ENCODE measurements at regions of chr15 and their contacts with region 1.

Region 1: DNA sequence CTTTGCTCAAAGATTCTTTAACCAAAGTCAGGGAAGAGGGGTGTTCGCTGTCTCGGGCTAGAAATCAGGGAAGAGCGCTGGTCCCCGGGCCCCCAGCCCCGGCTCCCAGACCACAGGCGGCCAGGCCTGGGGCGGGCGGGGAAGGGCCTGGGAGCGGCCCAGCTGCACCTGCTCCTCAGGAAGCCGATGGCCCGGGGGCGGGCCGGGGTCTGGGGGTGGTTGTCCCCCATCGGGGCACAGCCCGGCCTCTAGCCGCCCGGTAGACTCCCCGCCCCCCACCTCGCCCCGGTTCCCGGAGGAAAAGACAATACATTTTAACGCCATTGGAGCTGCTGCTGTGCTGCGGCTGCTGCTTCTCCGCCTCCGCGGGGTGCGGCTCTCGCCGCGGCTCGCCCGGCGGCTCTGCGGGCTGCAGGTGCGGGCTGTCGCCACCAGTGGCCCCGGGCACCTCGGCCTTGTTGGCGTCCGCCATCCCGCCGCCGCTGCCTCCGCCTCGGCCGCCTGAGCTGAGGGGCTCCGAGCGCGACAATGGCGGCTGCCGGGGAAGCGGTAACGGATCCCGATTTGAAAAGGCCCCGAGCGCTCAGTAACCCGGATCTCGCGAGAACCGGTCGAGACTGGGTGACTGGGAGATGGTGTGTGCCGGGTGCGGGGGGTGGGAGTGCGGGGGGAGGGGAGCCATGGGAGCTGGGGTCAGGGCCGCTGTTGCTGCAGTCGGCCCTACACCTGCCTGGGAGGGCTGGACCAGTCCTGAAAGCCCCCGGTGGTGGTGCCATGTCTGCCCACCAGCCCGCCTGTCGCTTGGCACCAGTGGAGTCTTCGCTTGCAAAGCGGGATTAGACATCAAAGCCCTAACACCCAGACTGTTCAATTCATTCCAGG is at the start of gene MYEF2:
- DNase-seq: peak; percentile 80
- ATAC-seq: peak; percentile 72
- H3K4me3 ChIP-seq: peak within 1 kb of the TSS; percentile 47 to 71 (median 67)
- H3K4me3 Mint-ChIP-seq: peak within 1 kb of the TSS; percentile 95
- H3K27ac ChIP-seq: peak within 1 kb of the TSS; percentile 21 to 81
- H3K27ac Mint-ChIP-seq: peak within 1 kb of the TSS; percentile 92
- H3K4me1 ChIP-seq: peaks cover 8 to 11% of the 10 kb centered on the region in 2 donors
- H3K4me1 Mint-ChIP-seq: peaks cover 18% of the 10 kb centered on the region
- H3K27me3 ChIP-seq: peaks cover 0 to 5% (median 2%) of the 10 kb centered on the region in 4 experiments
- H3K27me3 Mint-ChIP-seq: peaks cover 17% of the 10 kb centered on the region
- CTCF ChIP-seq: peak; percentile 35
- total RNA-seq, gene MYEF2: 34.3 and 36.3 TPM in 2 replicates

Region 2: DNA sequence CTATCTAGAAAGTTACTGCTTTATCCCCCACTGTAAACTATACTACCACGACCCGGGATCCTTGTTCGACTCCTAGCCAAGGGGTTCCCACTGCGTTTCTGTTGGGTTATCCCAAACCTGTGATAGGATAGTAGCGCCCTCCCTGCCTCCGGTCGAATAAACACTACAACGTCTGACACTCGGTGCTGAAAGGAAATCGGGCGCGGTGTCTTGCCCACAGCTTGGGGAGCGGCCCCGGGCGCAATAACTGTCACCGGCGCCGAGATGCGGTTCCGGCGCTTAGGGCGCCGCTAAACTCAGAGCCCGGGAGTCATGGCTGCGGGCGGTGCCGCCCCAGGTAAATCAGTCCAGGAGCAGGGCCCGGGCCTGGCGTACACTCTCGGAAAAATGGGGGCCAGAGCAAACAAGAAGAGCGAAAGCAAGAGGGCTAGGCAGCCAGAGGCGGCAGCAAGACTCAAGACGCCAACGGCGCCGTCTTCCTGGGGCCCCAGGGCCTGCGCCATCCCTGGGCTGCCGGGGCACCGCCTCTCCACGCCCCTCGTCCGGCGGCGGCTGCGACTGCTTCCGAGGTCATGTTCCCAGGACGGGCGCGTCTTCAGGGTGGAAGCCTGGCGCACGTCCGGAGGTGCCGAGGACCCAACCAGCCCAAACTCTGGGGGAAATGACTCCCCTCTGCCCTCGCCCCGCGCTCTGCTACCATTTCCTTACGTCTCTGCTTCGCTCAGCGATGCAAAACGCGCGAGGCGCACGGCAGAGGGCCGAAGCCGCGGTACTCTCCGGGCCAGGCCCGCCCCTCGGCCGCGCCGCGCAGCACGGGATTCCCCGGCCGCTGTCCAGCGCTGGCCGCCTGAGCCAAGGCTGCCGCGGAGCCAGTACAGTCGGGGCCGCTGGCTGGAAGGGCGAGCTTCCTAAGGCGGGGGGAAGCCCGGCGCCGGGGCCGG is 153.1 kb after region 1 on chr15 and contains the start of gene DUT:
- CTCF ChIA-PET with region 1: no interaction called
- POLR2A ChIA-PET with region 1: no interaction called
- intact Hi-C with region 1: loop called (anchors 2 kb)
- DNase-seq: peak; percentile 89
- ATAC-seq: peak; percentile 78
- H3K4me3 ChIP-seq: peak within 1 kb of the TSS; percentile 76 to 90 (median 77)
- H3K4me3 Mint-ChIP-seq: peak within 1 kb of the TSS; percentile 94
- H3K27ac ChIP-seq: peak within 1 kb of the TSS; percentile 83 to 90
- H3K27ac Mint-ChIP-seq: peak within 1 kb of the TSS; percentile 95
- H3K4me1 ChIP-seq: peaks cover 15 to 17% of the 10 kb centered on the region in 2 donors
- H3K4me1 Mint-ChIP-seq: peaks cover 25% of the 10 kb centered on the region
- H3K27me3 ChIP-seq: no peaks in the 10 kb centered on the region
- H3K27me3 Mint-ChIP-seq: no peaks in the 10 kb centered on the region
- CTCF ChIP-seq: no peak
- total RNA-seq, gene DUT: 84.7 and 89.8 TPM in 2 replicates